G401 (cell line): ENCODE measurements at regions of chr3 and their contacts with region 1.

Region 1: GRCh38 chr3:187327845-187328244 is 36.3 kb upstream of the MASP1 start:
- DNase-seq: no peak

Region 2: GRCh38 chr3:187130346-187131066 is 197.3 kb before region 1 on chr3:
- in situ Hi-C with region 1: no loop called
- DNase-seq: no peak

Region 3: DNA sequence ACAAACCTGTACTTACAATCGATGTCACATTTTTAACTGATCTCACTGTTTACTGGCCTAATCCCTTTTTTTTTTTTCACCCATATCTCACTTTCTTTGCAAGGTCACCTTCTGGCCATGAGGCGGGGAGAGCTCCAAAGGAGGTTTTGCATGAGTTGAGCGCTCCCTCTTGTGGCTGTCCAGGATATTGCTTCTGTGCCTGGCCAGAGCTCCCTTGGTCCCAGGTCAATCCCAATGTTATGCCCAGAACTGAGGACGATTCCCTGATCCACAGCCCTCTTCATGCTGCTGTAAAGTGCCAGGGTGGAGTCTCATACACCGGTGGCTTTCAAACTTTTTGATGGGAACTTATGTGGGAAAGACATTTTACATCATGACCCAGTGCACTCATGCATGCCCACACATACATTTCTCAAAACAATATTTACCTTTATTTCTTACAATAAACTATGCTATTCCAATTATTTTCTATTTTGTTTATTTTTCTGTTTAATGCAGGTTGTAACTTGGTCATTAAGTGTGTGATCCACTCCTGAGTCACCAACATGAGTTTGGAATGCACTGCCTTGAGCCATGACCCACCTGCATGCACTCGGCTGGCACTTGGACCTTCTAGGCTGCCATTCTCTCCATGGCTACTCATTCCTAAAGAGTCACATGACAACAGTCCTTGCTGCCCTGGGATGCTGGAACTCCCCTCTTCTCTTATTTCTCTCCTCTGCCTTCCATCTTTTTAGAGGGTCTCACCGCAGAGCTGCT is 352.0 kb after region 1 on chr3:
- in situ Hi-C with region 1: loop called (anchors 25 kb)
- DNase-seq: peak; percentile 68